Activated naive CD4-positive, alpha-beta T cell treated with anti-CD3 and anti-CD28 coated beads for 36 hours (primary cell): ENCODE measurements at regions of chrX and their contacts with region 1.

Region 1: DNA sequence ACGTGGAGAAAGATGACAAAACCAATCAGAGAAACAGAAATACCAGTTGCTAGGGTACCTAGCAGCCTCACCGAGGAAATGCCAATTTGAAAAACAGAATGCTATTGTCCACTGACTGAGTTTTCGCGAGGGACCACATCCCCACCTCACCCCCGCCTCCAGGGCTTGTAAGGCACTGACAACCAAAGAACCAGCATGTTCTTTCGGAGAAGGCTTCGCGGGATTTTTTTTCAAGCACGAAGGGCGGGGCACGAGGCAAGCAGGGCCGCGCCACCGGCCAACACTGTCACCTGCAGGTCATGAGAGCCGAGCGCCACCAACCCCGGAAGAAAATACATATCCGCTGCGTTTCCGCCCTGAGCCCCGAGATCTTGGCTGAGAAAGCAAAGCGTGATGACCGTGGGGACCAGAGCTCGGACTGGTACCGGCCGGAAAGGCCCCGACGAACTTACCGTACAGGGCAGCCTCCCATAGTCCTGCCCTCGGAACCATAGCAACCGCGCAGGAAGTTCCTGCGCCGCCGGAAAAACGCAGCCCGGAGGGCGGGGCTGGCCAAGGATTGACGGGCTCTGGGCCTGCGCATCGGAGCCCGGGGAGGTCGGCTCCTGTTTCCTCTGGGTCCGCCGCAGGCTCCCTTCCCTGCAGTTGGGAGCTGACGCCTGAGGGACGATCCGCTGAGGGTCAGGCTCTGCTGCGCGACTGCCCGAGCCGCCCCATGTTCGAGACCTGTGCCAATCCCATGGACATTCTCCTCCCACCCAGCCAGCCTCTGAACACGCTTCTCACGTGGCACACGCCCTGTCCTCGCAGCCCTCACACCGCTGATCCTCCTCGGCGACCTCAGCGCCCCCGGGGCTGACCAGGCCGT is 59.2 kb upstream of the PAGE5 start:
- DNase-seq: peak; percentile 92
- H3K4me3 Mint-ChIP-seq: peak overlapping the region; percentile 89
- H3K27ac Mint-ChIP-seq: peak overlapping the region; percentile 93
- H3K4me1 Mint-ChIP-seq: no peaks in the 10 kb centered on the region
- H3K27me3 Mint-ChIP-seq: no peaks in the 10 kb centered on the region

Region 2: DNA sequence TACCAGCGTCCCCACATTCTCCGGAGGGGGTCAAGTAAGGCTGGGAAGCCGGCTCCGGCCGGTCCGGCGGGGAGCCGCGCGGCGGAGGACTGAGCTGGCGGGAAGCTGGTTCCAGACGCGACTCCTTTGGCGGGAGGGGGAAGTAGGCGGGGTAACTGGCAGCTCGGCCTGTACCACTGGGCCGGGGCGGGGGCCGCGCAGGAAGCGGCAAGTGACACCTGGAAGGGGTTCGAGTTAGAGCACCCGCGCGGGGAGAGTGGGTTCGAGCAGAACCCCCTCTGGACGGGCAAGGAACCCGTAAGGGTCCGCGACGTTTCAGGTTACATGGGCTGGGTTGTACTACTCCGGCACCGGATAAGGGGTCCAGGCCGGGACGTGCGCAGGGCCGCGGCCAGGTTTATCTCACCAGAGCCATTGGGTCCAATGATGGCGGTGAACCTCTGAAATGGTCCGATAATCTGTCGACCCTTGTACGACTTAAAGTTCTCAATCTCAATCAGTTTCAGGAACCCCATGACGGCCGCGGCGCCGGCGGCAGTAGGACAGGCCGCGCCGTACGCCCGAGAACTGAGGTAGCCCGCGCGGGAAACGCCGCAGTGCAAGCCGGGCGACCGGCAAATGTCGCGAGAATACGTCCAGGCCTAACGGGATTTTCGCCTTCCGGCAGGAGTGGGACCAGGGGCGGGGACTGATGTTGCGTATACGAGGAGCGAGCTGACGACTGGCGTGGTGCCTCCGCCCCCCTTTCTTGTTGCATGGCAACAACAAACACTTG is 1738.6 kb before region 1 on chrX and contains the start of gene SMC1A:
- CTCF ChIA-PET with region 1: no interaction called
- intact Hi-C with region 1: loop called (anchors 2 kb)
- DNase-seq: peak; percentile 97
- H3K4me3 Mint-ChIP-seq: peak within 1 kb of the TSS; percentile 88
- H3K27ac Mint-ChIP-seq: peak within 1 kb of the TSS; percentile 97
- H3K4me1 Mint-ChIP-seq: peaks cover 30% of the 10 kb centered on the region
- H3K27me3 Mint-ChIP-seq: no peaks in the 10 kb centered on the region
- total RNA-seq, gene SMC1A: 169 to 170 TPM

Region 3: GRCh38 chrX:53714580-53715345 is 1446.2 kb before region 1 on chrX:
- CTCF ChIA-PET with region 1: no interaction called
- intact Hi-C with region 1: loop called (anchors 5 kb)
- DNase-seq: peak; percentile 77
- H3K4me3 Mint-ChIP-seq: peak overlapping the region; percentile 85
- H3K27ac Mint-ChIP-seq: peak overlapping the region; percentile 94
- H3K4me1 Mint-ChIP-seq: peaks cover 34% of the 10 kb centered on the region
- H3K27me3 Mint-ChIP-seq: no peaks in the 10 kb centered on the region

Region 4: DNA sequence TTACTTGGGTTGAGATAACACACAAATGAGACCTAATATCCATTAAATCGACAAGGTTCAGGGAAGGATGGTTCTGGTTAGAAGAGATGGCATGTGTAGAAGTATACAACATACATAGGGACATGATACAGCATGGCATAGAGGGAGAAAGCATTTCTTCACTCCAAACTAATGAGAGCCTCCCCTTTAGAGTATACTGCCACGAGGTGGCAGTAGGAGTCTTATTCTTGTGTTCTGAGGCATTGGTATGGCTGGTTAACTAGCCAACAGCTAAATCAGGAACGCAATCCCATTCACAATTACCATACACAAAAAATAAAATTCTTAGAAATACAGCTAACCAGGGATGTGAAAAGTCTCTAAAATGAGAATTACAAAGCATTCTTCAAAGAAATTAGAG is 269.3 kb before region 1 on chrX:
- CTCF ChIA-PET with region 1: no interaction called
- intact Hi-C with region 1: loop called (anchors 5 kb)
- DNase-seq: peak; percentile 51
- H3K4me3 Mint-ChIP-seq: no peak overlapping the region
- H3K27ac Mint-ChIP-seq: no peak overlapping the region
- H3K4me1 Mint-ChIP-seq: no peaks in the 10 kb centered on the region
- H3K27me3 Mint-ChIP-seq: no peaks in the 10 kb centered on the region

Region 5: GRCh38 chrX:55057675-55058249 is 103.2 kb before region 1 on chrX:
- CTCF ChIA-PET with region 1: no interaction called
- intact Hi-C with region 1: loop called (anchors 1 kb)
- DNase-seq: peak; percentile 35
- H3K4me3 Mint-ChIP-seq: peak overlapping the region; percentile 39
- H3K27ac Mint-ChIP-seq: no peak overlapping the region
- H3K4me1 Mint-ChIP-seq: peaks cover 18% of the 10 kb centered on the region
- H3K27me3 Mint-ChIP-seq: no peaks in the 10 kb centered on the region

Region 6: GRCh38 chrX:55717521-55718497 is 556.9 kb after region 1 on chrX and contains the start of gene RRAGB:
- CTCF ChIA-PET with region 1: no interaction called
- intact Hi-C with region 1: loop called (anchors 1 kb)
- DNase-seq: peak; percentile 91
- H3K4me3 Mint-ChIP-seq: peak within 1 kb of the TSS; percentile 80
- H3K27ac Mint-ChIP-seq: peak within 1 kb of the TSS; percentile 91
- H3K4me1 Mint-ChIP-seq: peaks cover 32% of the 10 kb centered on the region
- H3K27me3 Mint-ChIP-seq: no peaks in the 10 kb centered on the region
- total RNA-seq, gene RRAGB: 3.4 to 4.0 TPM